Activated B cell treated with CpG ODN at 0.5 μM for 24 hours (primary cell): ENCODE measurements at regions of chr15 and their contacts with region 1.

Region 1: GRCh38 chr15:89740137-89740536 is 10.9 kb downstream of the MESP1 start:
- DNase-seq: no peak
- ATAC-seq: peak; percentile 90
- H3K4me3 Mint-ChIP-seq: peak overlapping the region; percentile 15
- H3K27ac Mint-ChIP-seq: no peak overlapping the region
- H3K4me1 Mint-ChIP-seq: peaks cover 2% of the 10 kb centered on the region
- H3K27me3 Mint-ChIP-seq: peaks cover 8% of the 10 kb centered on the region
- CTCF ChIP-seq: peak; percentile 25

Region 2: GRCh38 chr15:89750560-89751542 is 10.7 kb after region 1 on chr15 and contains the start of gene MESP1:
- CTCF ChIA-PET with region 1: interaction called, 13 read pairs
- POLR2A ChIA-PET with region 1: interaction called, 3 read pairs
- intact Hi-C with region 1: loop called (anchors 1 kb)
- DNase-seq: peak; percentile 89
- ATAC-seq: peak; percentile 93
- H3K4me3 Mint-ChIP-seq: peak within 1 kb of the TSS; percentile 80
- H3K27ac Mint-ChIP-seq: no peak within 1 kb of the TSS
- H3K4me1 Mint-ChIP-seq: peaks cover 4% of the 10 kb centered on the region
- H3K27me3 Mint-ChIP-seq: peaks cover 9% of the 10 kb centered on the region
- CTCF ChIP-seq: no peak
- total RNA-seq, gene MESP1: 0.24 and 0.71 TPM in 2 replicates

Region 3: GRCh38 chr15:89971592-89971997 is 231.5 kb after region 1 on chr15:
- CTCF ChIA-PET with region 1: no interaction called
- POLR2A ChIA-PET with region 1: no interaction called
- intact Hi-C with region 1: loop called (anchors 1 kb)
- DNase-seq: peak; percentile 18
- ATAC-seq: peak; percentile 62
- H3K4me3 Mint-ChIP-seq: no peak overlapping the region
- H3K27ac Mint-ChIP-seq: no peak overlapping the region
- H3K4me1 Mint-ChIP-seq: peaks cover 36% of the 10 kb centered on the region
- H3K27me3 Mint-ChIP-seq: no peaks in the 10 kb centered on the region
- CTCF ChIP-seq: no peak

Region 4: GRCh38 chr15:90086868-90087268 is 346.7 kb after region 1 on chr15:
- CTCF ChIA-PET with region 1: interaction called, 17 read pairs
- POLR2A ChIA-PET with region 1: no interaction called
- intact Hi-C with region 1: loop called (anchors 1 kb)
- DNase-seq: peak; percentile 45
- ATAC-seq: peak; percentile 79
- H3K4me3 Mint-ChIP-seq: no peak overlapping the region
- H3K27ac Mint-ChIP-seq: no peak overlapping the region
- H3K4me1 Mint-ChIP-seq: peaks cover 15% of the 10 kb centered on the region
- H3K27me3 Mint-ChIP-seq: no peaks in the 10 kb centered on the region
- CTCF ChIP-seq: peak; percentile 22